Left lung (tissue), 14 donors: ENCODE measurements at regions of chr13 and their contacts with region 1.

Region 1: DNA sequence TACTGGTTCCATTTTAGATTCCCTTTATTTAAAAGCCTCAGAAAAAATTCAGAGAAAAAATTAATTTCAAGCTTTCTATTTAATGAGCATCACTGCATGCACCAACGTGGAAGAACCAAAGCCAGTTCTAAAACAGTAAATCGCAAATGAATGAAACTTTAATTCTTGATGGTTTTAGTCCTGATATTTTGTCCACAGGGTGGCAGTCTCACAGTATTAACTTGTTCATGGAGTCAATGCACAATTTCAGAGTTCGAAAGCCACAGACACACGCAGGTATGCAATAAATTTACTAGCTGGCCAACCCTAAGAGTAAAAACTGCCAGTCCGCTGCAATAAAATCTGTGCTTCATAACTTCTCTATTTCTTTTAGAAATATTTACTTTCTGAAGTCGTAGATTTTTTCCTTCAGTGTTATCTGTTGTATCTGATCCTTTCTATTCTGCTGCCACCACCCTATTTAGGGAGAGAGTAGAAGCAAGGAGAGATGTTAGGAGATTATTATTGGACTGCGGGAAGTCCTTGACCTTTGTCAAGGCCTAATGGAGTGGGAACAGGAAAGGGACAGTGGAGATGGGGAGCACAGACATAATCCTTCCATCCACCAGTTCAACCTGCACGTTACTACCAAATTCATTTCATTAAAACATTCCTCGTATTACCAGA is 7.0 kb upstream of the WBP4 start:
- DNase-seq: peak in 1 of 4 donors; percentile 43
- ATAC-seq: peak; percentile 61
- H3K4me3 ChIP-seq: no peak overlapping the region
- H3K27ac ChIP-seq: peak overlapping the region; percentile 57 to 61
- H3K4me1 ChIP-seq: peaks cover 22 to 96% of the 10 kb centered on the region in 2 donors
- H3K27me3 ChIP-seq: no peaks in the 10 kb centered on the region
- CTCF ChIP-seq: peak; percentile 28 to 40

Region 2: GRCh38 chr13:40874138-40874779 is 180.1 kb before region 1 on chr13:
- intact Hi-C with region 1: no loop called
- DNase-seq: peak in 1 of 4 donors; percentile 9
- ATAC-seq: no peak
- H3K4me3 ChIP-seq: no peak overlapping the region
- H3K27ac ChIP-seq: no peak overlapping the region
- H3K4me1 ChIP-seq: no peaks in the 10 kb centered on the region
- H3K27me3 ChIP-seq: no peaks in the 10 kb centered on the region
- CTCF ChIP-seq: no peak

Region 3: GRCh38 chr13:40992678-40993518 is 61.4 kb before region 1 on chr13:
- intact Hi-C with region 1: loop called in 1 of 2 experiments (anchors 10 kb)
- DNase-seq: no peak
- ATAC-seq: peak; percentile 14
- H3K4me3 ChIP-seq: no peak overlapping the region
- H3K27ac ChIP-seq: peak overlapping the region; percentile 39 to 68
- H3K4me1 ChIP-seq: peaks cover 5 to 83% of the 10 kb centered on the region in 2 donors
- H3K27me3 ChIP-seq: no peaks in the 10 kb centered on the region
- CTCF ChIP-seq: no peak

Region 4: DNA sequence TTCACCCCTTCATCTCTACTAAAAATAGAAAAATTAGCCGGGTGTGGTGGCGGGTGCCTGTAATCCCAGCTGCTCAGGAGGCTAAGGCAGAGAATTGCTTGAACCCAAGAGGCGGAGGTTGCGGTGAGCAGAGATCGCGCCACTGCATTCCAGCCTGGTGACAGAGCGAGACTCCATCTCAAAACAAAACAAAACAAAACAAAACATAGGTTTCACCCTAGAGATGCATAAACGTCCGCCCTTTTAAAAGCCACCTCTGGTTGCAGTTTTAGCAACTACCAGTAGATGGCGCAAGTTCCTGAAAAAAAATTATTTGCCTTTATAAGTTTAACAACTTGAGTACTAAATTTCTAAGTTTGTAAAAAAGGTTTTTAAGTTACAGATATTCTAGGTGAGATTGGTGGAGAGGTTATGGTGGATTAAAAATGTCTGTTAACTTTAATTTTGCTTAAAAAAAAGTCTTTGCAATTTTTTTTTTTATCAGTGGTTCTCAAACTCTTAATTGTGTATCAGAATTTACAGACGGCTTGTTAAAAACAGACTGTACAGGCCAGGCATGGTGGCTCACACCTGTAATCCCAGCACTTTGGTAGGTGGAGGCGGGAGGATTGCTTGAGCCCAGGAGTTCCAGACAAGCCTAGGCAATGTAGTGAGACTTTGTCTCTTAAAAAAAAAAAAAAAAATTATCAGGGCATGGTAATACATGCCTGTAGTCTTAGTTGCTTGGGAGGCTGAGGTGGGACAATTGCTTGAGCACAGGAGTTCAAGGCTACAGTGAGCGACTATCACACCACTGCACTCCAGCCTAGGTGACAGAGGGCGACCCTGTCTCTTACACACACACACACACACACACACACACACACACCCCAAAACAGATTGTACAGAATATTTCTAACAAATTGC is 298.8 kb after region 1 on chr13:
- intact Hi-C with region 1: no loop called
- DNase-seq: peak in 2 of 4 donors; percentile 35 to 36
- ATAC-seq: peak; percentile 68
- H3K4me3 ChIP-seq: no peak overlapping the region
- H3K27ac ChIP-seq: no peak overlapping the region
- H3K4me1 ChIP-seq: peaks cover 0 to 19% of the 10 kb centered on the region in 2 donors
- H3K27me3 ChIP-seq: no peaks in the 10 kb centered on the region
- CTCF ChIP-seq: peak; percentile 82 to 87